A549 (cell line): ENCODE measurements at regions of chr17 and their contacts with region 1.

Region 1: DNA sequence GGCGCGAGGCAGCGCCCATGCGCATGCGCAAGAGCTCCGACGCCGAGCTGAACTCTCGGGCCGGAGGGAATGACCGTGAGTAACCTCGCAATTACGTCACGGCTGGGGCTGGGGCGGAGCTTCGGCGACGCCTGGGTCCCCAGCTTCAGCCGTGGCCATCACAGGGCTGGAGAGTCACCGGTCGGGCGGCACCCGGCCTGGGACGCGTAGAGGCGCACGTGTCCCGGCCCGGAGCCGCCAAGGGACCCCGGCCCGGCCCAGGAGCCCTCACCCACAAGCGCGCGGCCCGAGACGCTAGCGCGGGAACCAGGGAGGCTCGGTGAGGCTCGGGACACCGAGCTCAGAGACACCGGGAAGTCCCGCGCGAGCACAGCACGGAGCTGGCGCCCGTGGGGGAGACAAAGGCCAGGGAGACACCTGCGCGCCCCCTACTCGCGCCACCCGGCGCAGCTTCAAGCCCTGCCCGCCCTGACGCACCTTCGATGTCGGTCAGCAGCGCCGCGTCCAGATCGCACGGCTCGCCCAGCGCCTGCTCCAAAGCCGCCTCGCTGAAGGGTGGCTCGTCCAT is 452 bp downstream of the SREBF1 start:
- DNase-seq: peak; percentile 96 to 98
- ATAC-seq: peak; percentile 45 to 62
- H3K4me3 ChIP-seq: peak overlapping the region; percentile 85
- H3K27ac ChIP-seq: peak overlapping the region; percentile 98
- H3K4me1 ChIP-seq: peaks cover 82% of the 10 kb centered on the region
- CTCF ChIP-seq: 0 out of 3 replicates have a peak, but pooled peaks have one; percentile 13
- EP300 ChIP-seq: no peak; a peak in 2 of 5 replicates
- POLR2A ChIP-seq: peak; percentile 89
- RAD21 ChIP-seq: no peak

Region 2: GRCh38 chr17:17694169-17695081 is 141.9 kb before region 1 on chr17:
- CTCF ChIA-PET with region 1: no interaction called
- POLR2A ChIA-PET with region 1: interaction called, 10 read pairs
- DNase-seq: peak; percentile 81 to 82
- ATAC-seq: peak; percentile 64 to 66
- H3K4me3 ChIP-seq: peak overlapping the region; percentile 76
- H3K27ac ChIP-seq: peak overlapping the region; percentile 96 to 97
- H3K4me1 ChIP-seq: peaks cover 90% of the 10 kb centered on the region
- CTCF ChIP-seq: no peak
- EP300 ChIP-seq: no peak; a peak in 1 of 5 replicates
- POLR2A ChIP-seq: peak; percentile 56
- RAD21 ChIP-seq: no peak

Region 3: DNA sequence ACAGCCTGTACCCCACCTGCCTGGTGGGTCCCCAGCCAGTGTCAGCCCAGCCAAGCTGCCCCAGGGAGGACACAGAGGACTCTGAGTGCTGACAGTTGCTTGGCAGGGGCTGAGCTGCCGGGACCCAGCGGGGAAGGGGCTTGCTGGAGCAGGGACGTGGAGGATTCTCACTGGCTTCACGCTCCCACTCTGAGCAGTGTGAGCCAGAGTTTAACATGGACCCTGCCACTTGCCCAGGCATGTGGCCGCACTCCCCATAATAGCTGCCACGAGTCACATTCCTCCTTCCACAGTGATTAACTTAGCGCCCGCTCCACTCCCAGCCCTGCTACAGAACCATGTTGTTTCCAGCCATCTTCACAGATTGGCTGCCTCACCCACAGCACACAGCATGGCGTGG is 30.8 kb before region 1 on chr17:
- CTCF ChIA-PET with region 1: interaction called, 859 read pairs
- POLR2A ChIA-PET with region 1: interaction called, 38 read pairs
- DNase-seq: no peak
- ATAC-seq: no peak
- H3K4me3 ChIP-seq: no peak overlapping the region
- H3K27ac ChIP-seq: peak overlapping the region in 1 of 2 experiments; percentile 56; a peak in 3 of 6 replicates
- H3K4me1 ChIP-seq: peaks cover 22% of the 10 kb centered on the region; the same call in 2 of the 3 replicates
- CTCF ChIP-seq: no peak
- EP300 ChIP-seq: no peak
- POLR2A ChIP-seq: no peak
- RAD21 ChIP-seq: no peak

Region 4: DNA sequence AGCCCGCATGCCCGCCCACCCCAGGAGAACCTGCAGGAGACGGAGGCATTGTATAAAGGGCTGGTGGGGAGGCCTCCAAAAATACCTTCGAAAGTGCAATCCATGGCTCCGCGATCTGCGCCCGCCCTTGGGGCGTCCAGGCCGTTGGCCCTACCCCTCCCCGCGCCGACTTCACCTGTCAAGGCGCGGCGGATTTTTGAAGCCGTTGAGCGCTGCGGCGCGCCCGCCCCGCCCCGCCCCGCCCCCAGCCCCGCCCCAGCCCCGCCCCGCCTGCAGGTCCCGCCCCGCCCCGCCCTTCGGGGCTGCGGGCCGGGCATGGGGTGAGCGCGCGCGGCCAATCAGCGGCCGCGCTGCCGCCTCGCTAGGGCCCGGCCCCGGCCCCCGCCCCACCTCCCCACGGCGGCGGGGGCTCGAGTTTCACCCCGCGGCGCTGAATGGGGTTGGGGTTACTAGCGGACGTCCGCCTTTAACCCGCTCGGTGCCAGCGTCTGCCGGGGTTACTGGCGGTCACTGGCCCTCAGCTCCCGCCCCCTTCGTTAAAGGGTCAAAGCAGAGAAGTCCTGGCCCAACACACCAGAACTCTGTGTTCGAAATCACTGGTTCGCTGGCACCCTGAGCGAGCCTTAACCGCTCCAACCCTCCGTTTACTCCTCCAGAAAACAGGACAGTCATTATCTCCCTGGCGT is 12.8 kb before region 1 on chr17:
- CTCF ChIA-PET with region 1: interaction called, 859 read pairs
- POLR2A ChIA-PET with region 1: interaction called, 105 read pairs
- DNase-seq: peak; percentile 90 to 98
- ATAC-seq: peak; percentile 55 to 76
- H3K4me3 ChIP-seq: peak overlapping the region; percentile 53
- H3K27ac ChIP-seq: peak overlapping the region; percentile 93 to 96
- H3K4me1 ChIP-seq: peaks cover 96% of the 10 kb centered on the region
- CTCF ChIP-seq: no peak
- EP300 ChIP-seq: peak in 1 of 2 experiments; percentile 37; a peak in 1 of 5 replicates
- POLR2A ChIP-seq: no peak
- RAD21 ChIP-seq: no peak; a peak in 1 of 5 replicates

Region 5: GRCh38 chr17:17849845-17850373 is 13.6 kb after region 1 on chr17:
- CTCF ChIA-PET with region 1: interaction called, 859 read pairs
- POLR2A ChIA-PET with region 1: interaction called, 38 read pairs
- DNase-seq: peak in 1 of 2 experiments; percentile 44
- ATAC-seq: peak; percentile 55 to 67; a peak in 4 of 6 replicates
- H3K4me3 ChIP-seq: no peak overlapping the region
- H3K27ac ChIP-seq: peak overlapping the region; percentile 32 to 74; a peak in 4 of 6 replicates
- H3K4me1 ChIP-seq: peaks cover 19% of the 10 kb centered on the region
- CTCF ChIP-seq: no peak
- EP300 ChIP-seq: no peak
- POLR2A ChIP-seq: no peak
- RAD21 ChIP-seq: no peak